HepG2 (cell line): ENCODE measurements at regions of chr12 and their contacts with region 1.

Region 1: GRCh38 chr12:112549031-112549430 is 130.3 kb downstream of the PTPN11 start:
- DNase-seq: no peak
- ATAC-seq: no peak
- H3K4me3 ChIP-seq: no peak overlapping the region
- H3K27ac ChIP-seq: no peak overlapping the region
- H3K4me1 ChIP-seq: no peaks in the 10 kb centered on the region
- H3K27me3 ChIP-seq: peaks cover 0 to 2% of the 10 kb centered on the region in 2 experiments; a peak in 2 of 5 replicates
- CTCF ChIP-seq: no peak
- EP300 ChIP-seq: no peak
- POLR2A ChIP-seq: no peak
- RAD21 ChIP-seq: no peak

Region 2: GRCh38 chr12:112488257-112488876 is 60.7 kb before region 1 on chr12:
- CTCF ChIA-PET with region 1: no interaction called
- POLR2A ChIA-PET with region 1: no interaction called
- in situ Hi-C with region 1: no loop called
- intact Hi-C with region 1: no loop called
- DNase-seq: no peak
- ATAC-seq: no peak
- H3K4me3 ChIP-seq: no peak overlapping the region
- H3K27ac ChIP-seq: no peak overlapping the region
- H3K4me1 ChIP-seq: no peaks in the 10 kb centered on the region
- H3K27me3 ChIP-seq: no peaks in the 10 kb centered on the region
- CTCF ChIP-seq: no peak
- EP300 ChIP-seq: no peak
- POLR2A ChIP-seq: no peak
- RAD21 ChIP-seq: no peak

Region 3: DNA sequence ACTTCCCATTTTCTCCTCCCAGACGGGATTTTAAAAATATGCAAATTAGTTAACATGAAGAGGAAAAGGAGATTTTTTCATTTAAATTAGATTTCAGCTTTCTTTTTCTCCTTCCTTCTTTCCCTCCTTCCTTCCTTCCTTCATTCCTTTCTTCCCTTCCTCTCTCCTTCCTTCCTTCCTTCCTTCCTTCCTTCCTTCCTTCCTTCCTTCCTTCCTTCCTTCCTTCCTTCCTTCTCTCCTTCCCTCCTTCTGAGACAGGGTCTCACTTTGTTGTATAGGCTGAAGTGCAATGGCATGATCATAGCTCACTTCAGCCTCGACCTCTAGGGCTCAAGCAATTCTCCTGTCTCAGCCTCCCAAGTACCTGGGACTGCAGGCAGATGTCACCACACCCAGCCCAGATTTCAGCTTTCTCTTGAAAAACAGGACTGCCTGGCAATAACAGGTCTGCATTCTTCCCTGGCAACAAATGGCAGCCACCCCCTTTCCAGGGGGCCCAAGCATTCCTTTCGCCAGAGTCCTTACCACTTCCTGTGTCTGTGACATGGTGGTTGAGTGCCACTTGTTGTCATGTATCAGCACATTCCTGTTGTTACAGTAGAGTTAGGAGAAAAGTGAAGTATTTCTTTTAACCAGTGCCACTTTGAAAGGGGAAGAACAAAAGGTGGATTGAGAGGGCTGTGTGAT is 11.2 kb before region 1 on chr12:
- CTCF ChIA-PET with region 1: no interaction called
- POLR2A ChIA-PET with region 1: no interaction called
- in situ Hi-C with region 1: no loop called
- intact Hi-C with region 1: loop called (anchors 1 kb)
- DNase-seq: peak; percentile 56
- ATAC-seq: no peak; the same call in 2 of the 3 replicates
- H3K4me3 ChIP-seq: no peak overlapping the region
- H3K27ac ChIP-seq: no peak overlapping the region
- H3K4me1 ChIP-seq: peaks cover 6% of the 10 kb centered on the region; the same call in 1 of the 2 replicates
- H3K27me3 ChIP-seq: peaks cover 0 to 11% of the 10 kb centered on the region in 2 experiments; a peak in 2 of 5 replicates
- CTCF ChIP-seq: no peak
- EP300 ChIP-seq: no peak
- POLR2A ChIP-seq: no peak
- RAD21 ChIP-seq: no peak